ENCODE measurements at regions of chr14 and their contacts with region 1.

Region 1: GRCh38 chr14:67571272-67571850 is 28.7 kb downstream of the PIGH start:
- DNase-seq: peak; percentile 85
- H3K4me3 ChIP-seq: no peak overlapping the region; a peak in 1 of 4 replicates
- H3K27ac ChIP-seq: no peak overlapping the region
- H3K4me1 ChIP-seq: no peaks in the 10 kb centered on the region; a peak in 1 of 4 replicates
- H3K27me3 ChIP-seq: no peaks in the 10 kb centered on the region
- CTCF ChIP-seq: peak; percentile 92
- EP300 ChIP-seq: no peak
- RAD21 ChIP-seq: peak; percentile 87

Region 2: GRCh38 chr14:67411820-67412421 is 159.4 kb before region 1 on chr14 and contains the start of gene PLEK2:
- CTCF ChIA-PET with region 1: interaction called, 14 read pairs
- POLR2A ChIA-PET with region 1: no interaction called
- DNase-seq: peak; percentile 60
- H3K4me3 ChIP-seq: peak within 1 kb of the TSS in 1 of 2 experiments; percentile 38; a peak in 3 of 4 replicates
- H3K27ac ChIP-seq: no peak within 1 kb of the TSS
- H3K4me1 ChIP-seq: peaks cover 7 to 10% of the 10 kb centered on the region in 2 experiments; a peak in 1 of 4 replicates
- H3K27me3 ChIP-seq: no peaks in the 10 kb centered on the region
- CTCF ChIP-seq: no peak
- EP300 ChIP-seq: no peak
- RAD21 ChIP-seq: no peak
- polyA plus RNA-seq, gene PLEK2: 0.11 and 0.56 TPM in 2 replicates

Region 3: GRCh38 chr14:67446120-67447032 is 125.0 kb before region 1 on chr14:
- CTCF ChIA-PET with region 1: interaction called, 17 read pairs
- POLR2A ChIA-PET with region 1: no interaction called
- DNase-seq: no peak
- H3K4me3 ChIP-seq: no peak overlapping the region
- H3K27ac ChIP-seq: no peak overlapping the region
- H3K4me1 ChIP-seq: peaks cover 3 to 6% of the 10 kb centered on the region in 2 experiments; a peak in 2 of 4 replicates
- H3K27me3 ChIP-seq: no peaks in the 10 kb centered on the region
- CTCF ChIP-seq: no peak
- EP300 ChIP-seq: no peak
- RAD21 ChIP-seq: no peak

Region 4: GRCh38 chr14:67473290-67474082 is 97.9 kb before region 1 on chr14:
- CTCF ChIA-PET with region 1: no interaction called
- POLR2A ChIA-PET with region 1: no interaction called
- DNase-seq: no peak
- H3K4me3 ChIP-seq: no peak overlapping the region
- H3K27ac ChIP-seq: no peak overlapping the region
- H3K4me1 ChIP-seq: no peaks in the 10 kb centered on the region
- H3K27me3 ChIP-seq: no peaks in the 10 kb centered on the region
- CTCF ChIP-seq: no peak
- EP300 ChIP-seq: no peak
- RAD21 ChIP-seq: no peak

Region 5: DNA sequence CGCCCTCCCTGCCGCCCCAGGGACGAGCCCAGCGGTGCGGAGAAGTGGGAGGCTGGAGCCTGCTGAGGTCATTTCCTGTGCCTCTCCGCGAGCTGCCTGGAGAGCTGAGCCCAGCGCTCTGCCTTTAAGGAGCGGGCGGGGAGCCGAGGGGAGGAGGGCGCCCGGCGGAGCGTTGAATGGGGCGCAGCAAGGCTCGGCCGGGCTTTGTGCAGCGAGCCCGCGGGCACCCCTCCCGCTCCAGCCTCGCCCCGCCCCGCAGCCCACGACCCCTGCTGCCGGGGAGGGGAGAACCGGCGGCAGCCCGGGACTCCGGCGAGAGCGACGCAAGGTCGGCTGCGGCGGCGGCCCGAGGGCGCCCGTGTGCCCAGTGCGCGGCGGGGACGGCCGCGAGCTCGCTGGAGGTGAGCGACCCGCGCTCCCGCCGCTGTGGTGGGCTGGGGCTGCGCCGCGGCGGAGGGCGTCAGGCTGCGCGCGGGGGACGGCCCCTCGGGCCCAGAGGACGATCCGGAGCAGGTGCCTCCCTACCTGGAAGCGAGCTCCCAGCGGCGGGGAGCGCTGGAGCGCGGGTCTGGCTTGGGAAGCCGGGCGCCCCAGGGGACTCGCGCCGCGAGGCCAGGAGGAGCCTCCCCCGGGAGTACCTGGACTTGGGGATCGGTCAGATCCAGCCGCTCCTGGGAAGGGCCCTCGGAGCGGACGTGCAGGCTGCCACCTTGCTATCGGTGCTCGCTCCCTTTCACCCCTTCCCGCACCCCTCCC is 38.2 kb before region 1 on chr14 and contains the start of gene PLEKHH1:
- CTCF ChIA-PET with region 1: interaction called, 237 read pairs
- POLR2A ChIA-PET with region 1: no interaction called
- DNase-seq: peak; percentile 91
- H3K4me3 ChIP-seq: peak within 1 kb of the TSS; percentile 63 to 70
- H3K27ac ChIP-seq: no peak within 1 kb of the TSS; a peak in 1 of 4 replicates
- H3K4me1 ChIP-seq: no peaks in the 10 kb centered on the region; a peak in 1 of 4 replicates
- H3K27me3 ChIP-seq: peaks cover 6% of the 10 kb centered on the region; the same call in 1 of the 2 replicates
- CTCF ChIP-seq: no peak
- EP300 ChIP-seq: no peak
- RAD21 ChIP-seq: no peak
- polyA plus RNA-seq, gene PLEKHH1: 1.5 and 1.6 TPM in 2 replicates

Region 6: GRCh38 chr14:67557126-67557525 is 14.2 kb before region 1 on chr14:
- CTCF ChIA-PET with region 1: interaction called, 18 read pairs
- POLR2A ChIA-PET with region 1: no interaction called
- DNase-seq: no peak
- H3K4me3 ChIP-seq: no peak overlapping the region
- H3K27ac ChIP-seq: no peak overlapping the region
- H3K4me1 ChIP-seq: no peaks in the 10 kb centered on the region
- H3K27me3 ChIP-seq: no peaks in the 10 kb centered on the region
- CTCF ChIP-seq: no peak
- EP300 ChIP-seq: no peak
- RAD21 ChIP-seq: no peak

Region 7: DNA sequence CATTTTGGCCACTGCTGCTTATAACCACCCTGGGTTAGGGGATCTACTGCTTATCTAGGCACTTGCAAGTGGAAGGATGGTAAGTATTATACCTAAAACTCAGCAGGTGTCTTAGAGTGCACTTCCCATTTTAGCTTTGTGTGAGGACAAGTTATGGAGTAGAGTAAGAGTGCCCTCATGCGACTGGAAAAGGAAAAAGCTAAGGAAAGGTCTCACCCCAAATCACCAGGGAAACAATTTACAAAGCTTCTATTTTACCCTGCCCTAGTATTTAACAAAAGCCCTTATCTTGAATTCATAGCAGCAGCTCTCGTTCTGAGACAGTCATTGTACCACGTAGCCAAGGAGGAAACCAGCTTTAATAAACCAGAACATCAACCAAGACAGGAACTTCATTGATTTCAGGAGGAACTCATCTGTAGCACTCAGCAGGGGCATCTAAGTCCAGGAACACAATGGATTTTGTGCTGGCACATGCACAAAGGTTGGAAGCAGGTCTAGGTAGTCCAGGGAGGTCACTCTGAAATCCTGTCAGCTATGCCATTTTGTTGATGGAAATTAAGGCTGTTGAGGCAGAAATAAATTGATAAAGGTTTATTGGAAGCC is 133.2 kb after region 1 on chr14:
- CTCF ChIA-PET with region 1: interaction called, 208 read pairs
- POLR2A ChIA-PET with region 1: no interaction called
- DNase-seq: peak; percentile 59
- H3K4me3 ChIP-seq: no peak overlapping the region
- H3K27ac ChIP-seq: no peak overlapping the region
- H3K4me1 ChIP-seq: no peaks in the 10 kb centered on the region
- H3K27me3 ChIP-seq: no peaks in the 10 kb centered on the region
- CTCF ChIP-seq: peak; percentile 78
- EP300 ChIP-seq: no peak
- RAD21 ChIP-seq: peak; percentile 92

Measured in SK-N-SH (cell line).